Activated naive CD4-positive, alpha-beta T cell treated with anti-CD3 and anti-CD28 coated beads for 36 hours (primary cell): ENCODE measurements at regions of chr2 and their contacts with region 1.

Region 1: DNA sequence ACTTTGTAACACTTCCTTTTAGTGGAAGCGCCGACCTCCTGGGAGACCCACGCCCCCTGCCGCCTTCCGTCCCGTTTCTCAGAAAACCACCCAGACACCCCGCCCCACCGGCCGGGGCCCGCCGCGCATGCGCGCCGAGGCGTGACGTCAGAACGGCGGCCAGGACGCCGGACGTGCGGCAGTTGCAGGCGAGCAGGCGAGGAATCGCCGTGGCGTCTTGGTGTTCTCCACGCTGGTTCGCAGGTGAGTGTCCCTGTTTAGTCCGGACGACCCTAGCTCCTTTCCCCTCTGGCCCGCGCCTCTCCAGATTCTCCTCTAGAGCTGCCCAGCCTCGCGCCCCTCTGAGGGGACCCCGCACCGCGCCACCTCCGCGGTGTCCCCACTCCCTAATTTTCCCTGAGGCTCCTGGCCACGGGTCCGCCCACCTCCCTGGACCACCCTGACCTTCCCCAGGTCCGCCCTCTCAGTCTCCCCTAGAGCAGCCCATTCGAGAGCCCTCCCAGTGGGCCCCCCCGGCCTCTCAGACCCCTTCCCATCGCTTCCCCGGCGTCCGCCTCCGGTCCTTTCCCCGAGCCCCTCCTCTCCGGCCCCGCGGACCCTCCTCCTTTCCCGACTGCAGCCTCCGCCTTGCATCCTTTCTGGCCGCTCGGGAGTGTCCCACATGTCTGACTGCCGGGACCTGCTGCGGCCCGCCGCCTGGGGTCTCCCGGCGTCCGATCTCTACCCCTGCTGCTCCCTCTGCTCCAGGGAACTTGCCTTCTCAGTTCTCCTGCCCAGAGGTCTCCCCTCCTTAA is at the start of gene PLEKHB2:
- DNase-seq: peak; percentile 92
- H3K4me3 Mint-ChIP-seq: peak within 1 kb of the TSS; percentile 93
- H3K27ac Mint-ChIP-seq: peak within 1 kb of the TSS; percentile 98
- H3K4me1 Mint-ChIP-seq: peaks cover 40% of the 10 kb centered on the region
- H3K27me3 Mint-ChIP-seq: no peaks in the 10 kb centered on the region
- total RNA-seq, gene PLEKHB2: 43.4 to 43.9 TPM

Region 2: GRCh38 chr2:131040661-131041401 is 64.5 kb before region 1 on chr2:
- CTCF ChIA-PET with region 1: no interaction called
- intact Hi-C with region 1: loop called (anchors 2 kb)
- DNase-seq: peak; percentile 51
- H3K4me3 Mint-ChIP-seq: peak overlapping the region; percentile 54
- H3K27ac Mint-ChIP-seq: no peak overlapping the region
- H3K4me1 Mint-ChIP-seq: peaks cover 29% of the 10 kb centered on the region
- H3K27me3 Mint-ChIP-seq: peaks cover 4% of the 10 kb centered on the region

Region 3: DNA sequence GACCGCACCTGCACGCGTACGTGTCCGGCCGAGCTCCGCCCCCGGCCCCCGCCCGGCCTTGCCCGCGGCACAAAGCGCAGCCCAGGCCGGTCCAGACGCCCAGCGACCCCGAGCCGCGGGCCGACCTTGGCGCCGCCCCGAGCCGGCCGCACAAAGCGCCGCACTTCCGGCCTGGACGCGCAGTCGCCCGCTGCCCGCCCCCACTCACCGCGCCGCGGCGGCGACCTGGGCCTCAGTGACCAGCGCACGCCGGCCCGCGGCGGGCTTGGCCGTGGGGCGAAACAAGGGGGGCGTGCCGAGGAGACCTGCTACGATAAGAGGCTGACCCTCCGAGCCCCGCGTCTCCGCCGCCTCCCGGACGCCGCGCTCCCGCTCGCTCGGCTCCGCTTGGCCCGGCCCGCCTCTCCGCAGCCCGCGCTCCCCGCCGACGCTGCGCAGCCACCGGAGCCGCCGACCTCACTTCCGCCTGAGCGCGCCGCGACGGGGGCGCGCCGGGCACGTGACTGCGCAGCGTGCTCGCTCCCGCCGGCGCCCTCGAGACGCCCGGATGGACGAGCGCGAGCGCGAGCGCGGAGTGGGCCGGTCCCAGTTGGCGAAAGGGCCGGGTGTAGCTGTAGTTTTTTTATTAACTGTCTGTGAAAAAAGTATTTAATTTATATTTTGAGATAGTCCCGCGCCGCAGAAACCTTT is 12.2 kb before region 1 on chr2 and contains the start of gene FAM168B:
- CTCF ChIA-PET with region 1: interaction called, 15 read pairs
- intact Hi-C with region 1: loop called (anchors 1 kb)
- DNase-seq: peak; percentile 86
- H3K4me3 Mint-ChIP-seq: peak within 1 kb of the TSS; percentile 85
- H3K27ac Mint-ChIP-seq: peak within 1 kb of the TSS; percentile 92
- H3K4me1 Mint-ChIP-seq: peaks cover 20% of the 10 kb centered on the region
- H3K27me3 Mint-ChIP-seq: no peaks in the 10 kb centered on the region
- total RNA-seq, gene FAM168B: 52.7 to 55.0 TPM

Region 4: GRCh38 chr2:131115752-131116151 is 10.4 kb after region 1 on chr2:
- CTCF ChIA-PET with region 1: no interaction called
- intact Hi-C with region 1: loop called (anchors 1 kb)
- DNase-seq: no peak
- H3K4me3 Mint-ChIP-seq: no peak overlapping the region
- H3K27ac Mint-ChIP-seq: no peak overlapping the region
- H3K4me1 Mint-ChIP-seq: peaks cover 60% of the 10 kb centered on the region
- H3K27me3 Mint-ChIP-seq: no peaks in the 10 kb centered on the region

Region 5: GRCh38 chr2:131140581-131140980 is 35.2 kb after region 1 on chr2:
- CTCF ChIA-PET with region 1: no interaction called
- intact Hi-C with region 1: no loop called
- DNase-seq: no peak
- H3K4me3 Mint-ChIP-seq: no peak overlapping the region
- H3K27ac Mint-ChIP-seq: no peak overlapping the region
- H3K4me1 Mint-ChIP-seq: peaks cover 13% of the 10 kb centered on the region
- H3K27me3 Mint-ChIP-seq: no peaks in the 10 kb centered on the region